Calu3 (cell line): ENCODE measurements at regions of chr1 and their contacts with region 1.

Region 1: GRCh38 chr1:117895482-117896114 is 33.8 kb downstream of the GDAP2 start:
- DNase-seq: peak; percentile 65
- H3K4me3 Mint-ChIP-seq: no peak overlapping the region
- H3K27ac Mint-ChIP-seq: no peak overlapping the region
- H3K4me1 Mint-ChIP-seq: no peaks in the 10 kb centered on the region
- H3K27me3 Mint-ChIP-seq: no peaks in the 10 kb centered on the region
- CTCF ChIP-seq: peak; percentile 43

Region 2: DNA sequence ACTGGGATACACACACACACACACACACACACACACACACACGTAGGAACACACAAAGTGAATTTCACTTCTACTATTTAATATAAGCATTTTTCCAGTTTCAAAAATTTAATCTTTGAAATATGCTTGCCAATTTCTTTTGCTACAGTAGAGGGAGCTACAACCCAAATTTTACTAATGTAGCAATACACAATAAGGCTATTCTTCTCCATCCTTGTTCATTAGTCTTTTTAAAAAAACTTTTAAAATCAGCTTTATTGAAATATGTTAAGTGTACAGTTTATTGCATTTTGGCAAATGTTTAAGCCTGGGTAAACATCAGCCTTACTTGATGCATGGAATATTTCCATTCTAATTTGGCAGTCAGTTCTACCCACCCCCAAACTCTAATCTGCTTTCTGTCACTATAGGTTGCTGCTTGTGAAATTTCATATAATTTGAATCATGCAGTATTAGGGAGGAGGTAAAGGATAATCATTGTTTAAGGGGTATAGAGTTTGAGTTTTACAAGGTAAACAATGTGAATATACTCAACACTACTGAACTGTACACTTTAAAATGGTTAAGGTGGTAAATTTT is 382.8 kb before region 1 on chr1:
- CTCF ChIA-PET with region 1: interaction called, 4 read pairs
- intact Hi-C with region 1: loop called (anchors 2 kb)
- DNase-seq: no peak
- H3K4me3 Mint-ChIP-seq: no peak overlapping the region
- H3K27ac Mint-ChIP-seq: no peak overlapping the region
- H3K4me1 Mint-ChIP-seq: no peaks in the 10 kb centered on the region
- H3K27me3 Mint-ChIP-seq: no peaks in the 10 kb centered on the region
- CTCF ChIP-seq: no peak

Region 3: GRCh38 chr1:117685936-117686806 is 209.4 kb before region 1 on chr1:
- CTCF ChIA-PET with region 1: no interaction called
- intact Hi-C with region 1: no loop called
- DNase-seq: no peak
- H3K4me3 Mint-ChIP-seq: no peak overlapping the region
- H3K27ac Mint-ChIP-seq: no peak overlapping the region
- H3K4me1 Mint-ChIP-seq: no peaks in the 10 kb centered on the region
- H3K27me3 Mint-ChIP-seq: peaks cover 33% of the 10 kb centered on the region
- CTCF ChIP-seq: no peak

Region 4: DNA sequence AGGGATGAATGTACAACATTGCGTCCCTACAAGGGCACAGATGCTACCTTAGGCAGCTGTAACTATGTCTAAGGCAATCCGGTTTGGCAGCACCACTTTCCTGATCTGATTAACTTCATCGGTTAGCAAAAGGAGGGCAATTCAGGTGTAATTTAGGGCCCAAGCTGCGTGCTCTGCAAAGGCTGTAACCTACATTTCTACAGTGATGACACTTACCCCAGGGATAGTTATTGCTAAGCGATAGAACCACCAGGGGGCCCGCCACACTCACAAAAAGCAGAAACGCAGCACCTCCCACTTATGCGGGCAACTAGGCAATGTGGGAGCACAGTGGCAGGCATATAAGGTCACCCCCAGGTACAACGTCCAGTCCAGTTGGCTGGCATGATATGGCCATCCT is 79.7 kb before region 1 on chr1:
- CTCF ChIA-PET with region 1: no interaction called
- intact Hi-C with region 1: loop called (anchors 10 kb)
- DNase-seq: no peak
- H3K4me3 Mint-ChIP-seq: no peak overlapping the region
- H3K27ac Mint-ChIP-seq: no peak overlapping the region
- H3K4me1 Mint-ChIP-seq: no peaks in the 10 kb centered on the region
- H3K27me3 Mint-ChIP-seq: no peaks in the 10 kb centered on the region
- CTCF ChIP-seq: no peak